ENCODE measurements at regions of chr16 and their contacts with region 1.

Region 1: GRCh38 chr16:8295513-8296237 is 294.6 kb downstream of the TMEM114 start:
- DNase-seq: no peak
- H3K4me3 ChIP-seq: no peak overlapping the region
- CTCF ChIP-seq: no peak

Region 2: GRCh38 chr16:8346278-8346677 is 50.6 kb after region 1 on chr16:
- in situ Hi-C with region 1: loop called (anchors 5 kb)
- DNase-seq: no peak
- H3K4me3 ChIP-seq: no peak overlapping the region
- CTCF ChIP-seq: no peak